PC-3 (cell line): ENCODE measurements at regions of chr20 and their contacts with region 1.

Region 1: DNA sequence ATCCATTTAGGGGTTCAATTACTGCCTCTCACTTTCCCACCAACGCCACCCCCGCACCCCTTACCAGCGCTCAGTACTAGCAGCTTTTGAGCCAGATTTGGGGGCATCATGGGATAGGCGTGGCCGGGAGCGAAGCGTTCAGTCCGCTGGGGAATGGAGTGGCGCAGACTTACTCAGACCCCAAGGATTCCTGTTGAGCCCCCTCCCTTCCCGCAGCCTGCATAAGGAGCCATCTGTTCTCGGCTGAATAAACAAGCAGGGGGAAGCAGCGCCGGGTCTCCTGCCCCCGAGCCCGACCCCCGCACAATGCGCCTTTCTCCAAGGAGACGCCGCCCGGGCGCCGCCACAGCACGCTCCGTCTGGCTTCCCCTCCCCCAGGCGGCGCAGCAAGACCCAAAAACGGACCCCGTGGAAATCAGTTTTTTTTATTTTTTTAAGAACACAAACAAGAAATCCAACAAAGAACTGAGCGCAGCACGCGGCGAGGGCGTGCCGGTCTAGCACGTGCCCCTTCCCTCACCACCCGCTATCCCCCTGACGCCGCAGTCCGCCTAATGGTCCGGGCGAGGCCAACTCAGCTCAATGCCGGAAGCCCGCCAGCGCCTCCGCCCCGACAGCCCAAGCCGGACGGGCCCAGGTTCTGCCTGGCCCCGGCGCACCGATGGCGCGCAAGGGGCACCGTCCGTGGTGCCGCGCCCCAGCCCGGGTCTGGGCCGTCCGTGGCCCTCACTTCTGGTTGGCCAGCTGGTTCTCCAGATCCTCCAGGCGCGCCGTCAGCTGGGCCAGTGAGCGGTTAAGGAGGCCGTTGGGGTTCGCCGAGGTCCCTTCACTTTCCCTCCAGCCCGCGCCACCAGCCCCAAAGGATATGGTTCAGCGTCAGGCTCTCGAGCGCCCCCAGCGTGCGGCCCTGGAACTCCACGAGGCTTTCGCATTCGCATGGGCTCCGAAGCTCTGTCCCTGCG is 13.3 kb upstream of the RBPJL start:
- DNase-seq: peak; percentile 90
- ATAC-seq: peak; percentile 78
- H3K4me3 ChIP-seq: peak overlapping the region; percentile 70
- H3K27ac ChIP-seq: no peak overlapping the region
- H3K4me1 ChIP-seq: peaks cover 6% of the 10 kb centered on the region
- H3K27me3 ChIP-seq: no peaks in the 10 kb centered on the region
- CTCF ChIP-seq: peak; percentile 90

Region 2: GRCh38 chr20:44909872-44910689 is 383.2 kb before region 1 on chr20 and contains the start of gene PABPC1L:
- CTCF ChIA-PET with region 1: no interaction called
- POLR2A ChIA-PET with region 1: no interaction called
- intact Hi-C with region 1: loop called (anchors 5 kb)
- DNase-seq: peak; percentile 79
- ATAC-seq: peak; percentile 84
- H3K4me3 ChIP-seq: peak within 1 kb of the TSS; percentile 79
- H3K27ac ChIP-seq: no peak within 1 kb of the TSS
- H3K4me1 ChIP-seq: peaks cover 6% of the 10 kb centered on the region; the same call in 1 of the 2 replicates
- H3K27me3 ChIP-seq: no peaks in the 10 kb centered on the region
- CTCF ChIP-seq: no peak
- total RNA-seq, gene PABPC1L: 32.0 and 40.7 TPM in 2 replicates

Region 3: GRCh38 chr20:45044084-45044573 is 249.2 kb before region 1 on chr20:
- CTCF ChIA-PET with region 1: interaction called, 22 read pairs
- POLR2A ChIA-PET with region 1: interaction called, 4 read pairs
- intact Hi-C with region 1: loop called (anchors 1 kb)
- DNase-seq: peak; percentile 90
- ATAC-seq: peak; percentile 79
- H3K4me3 ChIP-seq: no peak overlapping the region
- H3K27ac ChIP-seq: no peak overlapping the region
- H3K4me1 ChIP-seq: peaks cover 26% of the 10 kb centered on the region
- H3K27me3 ChIP-seq: no peaks in the 10 kb centered on the region
- CTCF ChIP-seq: peak; percentile 97

Region 4: DNA sequence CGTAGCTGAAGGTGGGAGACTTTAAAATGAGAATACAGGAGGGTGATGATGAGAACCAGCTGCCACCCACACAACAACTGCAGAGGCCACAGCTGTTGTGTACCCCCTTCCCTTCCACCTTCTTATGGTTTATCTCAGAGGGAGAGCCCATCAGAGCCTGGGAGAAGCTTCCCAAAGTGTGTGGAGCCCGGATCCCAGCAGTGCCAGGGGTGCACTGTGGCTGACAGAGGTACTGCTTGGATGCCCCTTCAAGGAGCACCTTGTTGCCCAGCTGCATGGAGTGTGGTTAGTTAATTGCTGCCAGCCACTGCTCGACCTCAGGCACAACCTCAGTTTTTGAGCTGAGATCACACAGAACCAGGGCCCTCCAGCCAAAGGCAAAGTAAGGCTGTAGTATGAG is 105.7 kb before region 1 on chr20:
- CTCF ChIA-PET with region 1: no interaction called
- POLR2A ChIA-PET with region 1: no interaction called
- intact Hi-C with region 1: loop called (anchors 5 kb)
- DNase-seq: no peak
- ATAC-seq: no peak
- H3K4me3 ChIP-seq: no peak overlapping the region
- H3K27ac ChIP-seq: no peak overlapping the region
- H3K4me1 ChIP-seq: peaks cover 16% of the 10 kb centered on the region
- H3K27me3 ChIP-seq: no peaks in the 10 kb centered on the region
- CTCF ChIP-seq: no peak

Region 5: GRCh38 chr20:45254869-45255266 is 38.5 kb before region 1 on chr20:
- CTCF ChIA-PET with region 1: interaction called, 3 read pairs
- POLR2A ChIA-PET with region 1: interaction called, 7 read pairs
- intact Hi-C with region 1: loop called (anchors 2 kb)
- DNase-seq: peak; percentile 67
- ATAC-seq: peak; percentile 23; the same call in 1 of the 2 replicates
- H3K4me3 ChIP-seq: peak overlapping the region; percentile 58; the same call in 1 of the 2 replicates
- H3K27ac ChIP-seq: peak overlapping the region; percentile 86
- H3K4me1 ChIP-seq: peaks cover 38% of the 10 kb centered on the region
- H3K27me3 ChIP-seq: no peaks in the 10 kb centered on the region
- CTCF ChIP-seq: no peak

Region 6: GRCh38 chr20:45268531-45268930 is 24.8 kb before region 1 on chr20:
- CTCF ChIA-PET with region 1: no interaction called
- POLR2A ChIA-PET with region 1: no interaction called
- intact Hi-C with region 1: no loop called
- DNase-seq: peak; percentile 31
- ATAC-seq: 0 out of 2 replicates have a peak, but pooled peaks have one; percentile 27
- H3K4me3 ChIP-seq: no peak overlapping the region
- H3K27ac ChIP-seq: no peak overlapping the region
- H3K4me1 ChIP-seq: peaks cover 9% of the 10 kb centered on the region; the same call in 1 of the 2 replicates
- H3K27me3 ChIP-seq: no peaks in the 10 kb centered on the region
- CTCF ChIP-seq: no peak